CD4-positive, alpha-beta memory T cell (primary cell): ENCODE measurements at regions of chr9 and their contacts with region 1.

Region 1: GRCh38 chr9:69035438-69036308 is at the start of gene FXN:
- DNase-seq: peak; percentile 71 to 82 (median 78)
- H3K4me3 ChIP-seq: peak within 1 kb of the TSS; percentile 78 to 86
- H3K4me3 Mint-ChIP-seq: peak within 1 kb of the TSS; percentile 95 to 99 (median 98)
- H3K27ac ChIP-seq: peak within 1 kb of the TSS; percentile 60
- H3K27ac Mint-ChIP-seq: peak within 1 kb of the TSS; percentile 87 to 96 (median 94)
- H3K4me1 ChIP-seq: peaks cover 23% of the 10 kb centered on the region
- H3K4me1 Mint-ChIP-seq: peaks cover 18 to 36% (median 23%) of the 10 kb centered on the region in 4 donors
- H3K27me3 ChIP-seq: no peaks in the 10 kb centered on the region
- H3K27me3 Mint-ChIP-seq: no peaks in the 10 kb centered on the region
- total RNA-seq, gene FXN: 14.6 to 15.9 TPM

Region 2: DNA sequence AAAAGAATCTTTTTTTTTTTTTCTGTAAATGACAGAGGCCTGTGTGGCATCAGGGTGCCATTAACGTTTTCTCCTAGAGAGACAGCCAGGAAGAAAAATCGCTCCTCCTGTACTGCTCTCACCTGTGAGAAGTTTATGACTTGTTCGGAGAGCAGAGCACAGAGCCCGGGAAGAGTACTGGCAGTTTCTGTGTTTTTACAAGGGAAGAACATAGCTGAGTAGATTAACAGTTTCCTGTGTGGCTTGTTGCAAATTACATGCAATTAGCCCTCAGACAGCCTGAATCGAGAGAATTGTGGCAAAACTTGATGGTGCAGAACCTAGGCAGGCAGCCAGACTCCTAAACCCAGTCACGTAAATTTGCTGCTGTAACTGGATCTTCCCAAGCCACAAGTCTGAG is 53.9 kb before region 1 on chr9:
- CTCF ChIA-PET with region 1: no interaction called
- POLR2A ChIA-PET with region 1: no interaction called
- intact Hi-C with region 1: no loop called
- DNase-seq: no peak
- H3K4me3 ChIP-seq: no peak overlapping the region
- H3K4me3 Mint-ChIP-seq: no peak overlapping the region
- H3K27ac ChIP-seq: no peak overlapping the region
- H3K27ac Mint-ChIP-seq: no peak overlapping the region
- H3K4me1 ChIP-seq: peaks cover 16% of the 10 kb centered on the region
- H3K4me1 Mint-ChIP-seq: peaks cover 3 to 6% (median 6%) of the 10 kb centered on the region in 4 donors
- H3K27me3 ChIP-seq: no peaks in the 10 kb centered on the region
- H3K27me3 Mint-ChIP-seq: no peaks in the 10 kb centered on the region

Region 3: DNA sequence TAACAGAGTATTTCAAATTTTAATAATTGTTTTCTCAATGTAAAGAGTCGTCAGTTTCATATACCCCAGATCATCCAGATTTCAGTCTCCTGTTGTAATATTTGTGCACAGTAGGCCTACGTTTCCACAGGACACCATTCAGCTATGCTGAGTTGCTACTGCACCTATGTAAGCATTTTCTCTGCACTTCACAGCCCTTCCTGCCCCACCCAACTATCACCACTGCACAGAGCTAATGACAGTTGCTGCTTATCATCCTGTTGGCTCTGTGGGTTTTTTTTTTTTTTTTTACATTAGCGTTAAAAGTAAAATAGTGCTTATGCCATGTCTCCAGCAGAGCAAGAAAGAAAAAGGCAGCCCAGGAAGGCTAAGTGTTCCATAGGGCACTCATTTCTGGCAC is 15.9 kb before region 1 on chr9:
- CTCF ChIA-PET with region 1: interaction called, 43 read pairs
- POLR2A ChIA-PET with region 1: interaction called, 18 read pairs
- intact Hi-C with region 1: loop called (anchors 1 kb)
- DNase-seq: peak; percentile 62 to 72 (median 66)
- H3K4me3 ChIP-seq: no peak overlapping the region
- H3K4me3 Mint-ChIP-seq: peak overlapping the region in 7 of 8 donors; percentile 46 to 73 (median 56)
- H3K27ac ChIP-seq: peak overlapping the region; percentile 13
- H3K27ac Mint-ChIP-seq: peak overlapping the region; percentile 0 to 68 (median 26)
- H3K4me1 ChIP-seq: peaks cover 24% of the 10 kb centered on the region
- H3K4me1 Mint-ChIP-seq: peaks cover 17 to 35% (median 25%) of the 10 kb centered on the region in 4 donors
- H3K27me3 ChIP-seq: no peaks in the 10 kb centered on the region
- H3K27me3 Mint-ChIP-seq: peaks cover under 1 to 2% of the 10 kb centered on the region in 2 donors

Region 4: DNA sequence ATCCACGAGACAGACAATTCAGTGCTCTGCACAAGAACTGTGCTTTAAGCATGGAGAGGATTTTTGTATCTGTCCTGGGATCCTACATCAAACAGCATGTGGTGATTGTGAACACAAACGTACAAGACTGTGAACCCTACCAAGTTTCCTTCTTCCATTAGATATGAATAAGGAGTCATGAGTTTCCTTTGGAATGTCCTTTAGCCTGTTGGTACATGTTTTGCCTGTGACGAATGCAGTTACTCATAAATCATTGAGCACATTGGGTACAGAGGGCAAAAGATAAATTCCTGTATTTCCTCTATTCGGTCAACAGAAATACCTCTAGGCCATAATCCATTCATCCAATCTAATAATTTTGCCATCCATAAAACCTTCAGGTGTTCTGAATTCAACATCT is 61.4 kb after region 1 on chr9:
- CTCF ChIA-PET with region 1: no interaction called
- POLR2A ChIA-PET with region 1: no interaction called
- intact Hi-C with region 1: no loop called
- DNase-seq: no peak
- H3K4me3 ChIP-seq: no peak overlapping the region
- H3K4me3 Mint-ChIP-seq: no peak overlapping the region
- H3K27ac ChIP-seq: no peak overlapping the region
- H3K27ac Mint-ChIP-seq: no peak overlapping the region
- H3K4me1 ChIP-seq: no peaks in the 10 kb centered on the region
- H3K4me1 Mint-ChIP-seq: no peaks in the 10 kb centered on the region
- H3K27me3 ChIP-seq: no peaks in the 10 kb centered on the region
- H3K27me3 Mint-ChIP-seq: no peaks in the 10 kb centered on the region

Region 5: DNA sequence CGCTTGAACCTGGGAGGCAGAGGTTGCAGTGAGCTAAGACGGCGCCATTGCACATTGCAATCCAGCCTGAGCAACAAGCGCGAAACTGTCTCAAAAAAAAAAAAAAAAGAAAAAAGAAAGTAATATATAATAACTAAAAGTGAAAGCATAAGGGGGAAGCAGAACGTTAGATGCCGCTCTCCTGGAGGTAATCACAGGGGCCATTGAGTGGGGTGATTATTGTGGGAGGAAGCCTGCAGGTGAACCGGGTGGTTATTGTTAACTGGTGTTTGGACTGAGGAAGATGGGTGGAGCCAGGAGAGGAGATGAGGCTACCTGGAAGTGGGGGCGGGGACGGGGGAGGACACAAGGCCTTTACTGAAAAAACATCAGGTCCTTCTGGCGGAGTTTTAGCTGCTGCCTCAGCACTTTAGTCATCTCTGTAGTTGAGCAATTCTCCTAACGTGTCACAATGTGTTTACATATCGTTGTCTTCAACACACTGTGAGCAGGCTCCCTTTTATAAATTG is 133.1 kb after region 1 on chr9:
- CTCF ChIA-PET with region 1: interaction called, 7 read pairs
- POLR2A ChIA-PET with region 1: no interaction called
- intact Hi-C with region 1: loop called (anchors 5 kb)
- DNase-seq: peak; percentile 25 to 55 (median 40)
- H3K4me3 ChIP-seq: peak overlapping the region in 1 of 2 donors; percentile 47
- H3K4me3 Mint-ChIP-seq: peak overlapping the region; percentile 86 to 95 (median 91)
- H3K27ac ChIP-seq: peak overlapping the region; percentile 22
- H3K27ac Mint-ChIP-seq: peak overlapping the region; percentile 41 to 95 (median 86)
- H3K4me1 ChIP-seq: peaks cover 18% of the 10 kb centered on the region
- H3K4me1 Mint-ChIP-seq: peaks cover 9 to 27% (median 17%) of the 10 kb centered on the region in 4 donors
- H3K27me3 ChIP-seq: peaks cover 10% of the 10 kb centered on the region
- H3K27me3 Mint-ChIP-seq: peaks cover 4 to 14% of the 10 kb centered on the region in 2 donors

Region 6: GRCh38 chr9:69190086-69190862 is 154.6 kb after region 1 on chr9:
- CTCF ChIA-PET with region 1: interaction called, 56 read pairs
- POLR2A ChIA-PET with region 1: interaction called, 10 read pairs
- intact Hi-C with region 1: loop called (anchors 1 kb)
- DNase-seq: no peak
- H3K4me3 ChIP-seq: no peak overlapping the region
- H3K4me3 Mint-ChIP-seq: no peak overlapping the region
- H3K27ac ChIP-seq: no peak overlapping the region
- H3K27ac Mint-ChIP-seq: no peak overlapping the region
- H3K4me1 ChIP-seq: peaks cover 9% of the 10 kb centered on the region
- H3K4me1 Mint-ChIP-seq: peaks cover 2 to 10% (median 7%) of the 10 kb centered on the region in 4 donors
- H3K27me3 ChIP-seq: no peaks in the 10 kb centered on the region
- H3K27me3 Mint-ChIP-seq: no peaks in the 10 kb centered on the region

Region 7: DNA sequence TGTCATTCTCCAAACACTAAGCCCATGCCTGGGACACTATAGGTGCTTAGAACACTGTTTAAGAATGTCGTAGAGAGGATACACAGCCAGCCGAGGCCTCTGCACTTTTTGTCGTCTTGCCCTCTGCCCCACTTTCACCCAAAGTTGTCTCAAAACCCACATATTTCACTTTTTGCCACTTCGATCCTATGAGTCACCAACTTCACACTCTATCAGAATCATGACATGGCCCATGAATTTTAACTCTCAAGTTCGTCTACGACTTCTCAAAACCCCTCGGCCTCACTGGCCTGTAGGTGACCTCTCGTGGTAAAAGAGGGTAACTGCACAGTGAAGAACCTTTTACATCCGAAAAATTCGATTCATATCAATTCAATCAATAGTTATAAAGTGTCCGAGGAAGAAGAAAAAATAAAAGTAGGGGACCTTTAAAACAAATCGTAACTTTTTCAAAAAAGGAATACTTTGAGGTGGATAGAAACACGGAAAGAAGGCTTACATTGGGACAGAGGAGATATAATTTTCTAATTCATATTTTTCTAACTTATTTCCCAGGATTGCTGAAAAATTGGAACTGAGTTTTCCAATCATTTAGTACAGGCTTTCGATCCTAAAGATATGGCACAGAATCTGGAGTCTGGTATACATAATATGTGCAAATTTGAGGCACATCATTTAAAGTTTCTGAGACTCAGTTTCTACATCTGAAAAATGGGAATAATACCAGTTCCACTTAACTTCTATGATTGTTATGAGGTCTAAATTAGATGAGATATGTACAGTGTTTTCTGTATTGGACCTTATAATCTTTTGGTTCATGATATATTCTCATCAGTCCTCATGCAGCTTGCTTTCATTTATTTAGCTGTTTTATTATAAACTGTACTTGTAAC is 513.9 kb after region 1 on chr9:
- CTCF ChIA-PET with region 1: no interaction called
- POLR2A ChIA-PET with region 1: no interaction called
- intact Hi-C with region 1: loop called (anchors 5 kb)
- DNase-seq: peak in 4 of 5 donors; percentile 36 to 45 (median 38)
- H3K4me3 ChIP-seq: no peak overlapping the region
- H3K4me3 Mint-ChIP-seq: peak overlapping the region in 6 of 8 donors; percentile 5 to 49 (median 33)
- H3K27ac ChIP-seq: no peak overlapping the region
- H3K27ac Mint-ChIP-seq: peak overlapping the region in 1 of 7 donors; percentile 26
- H3K4me1 ChIP-seq: no peaks in the 10 kb centered on the region
- H3K4me1 Mint-ChIP-seq: peaks cover 0 to 6% (median 4%) of the 10 kb centered on the region in 4 donors
- H3K27me3 ChIP-seq: no peaks in the 10 kb centered on the region
- H3K27me3 Mint-ChIP-seq: peaks cover 4 to 6% of the 10 kb centered on the region in 2 donors

Region 8: DNA sequence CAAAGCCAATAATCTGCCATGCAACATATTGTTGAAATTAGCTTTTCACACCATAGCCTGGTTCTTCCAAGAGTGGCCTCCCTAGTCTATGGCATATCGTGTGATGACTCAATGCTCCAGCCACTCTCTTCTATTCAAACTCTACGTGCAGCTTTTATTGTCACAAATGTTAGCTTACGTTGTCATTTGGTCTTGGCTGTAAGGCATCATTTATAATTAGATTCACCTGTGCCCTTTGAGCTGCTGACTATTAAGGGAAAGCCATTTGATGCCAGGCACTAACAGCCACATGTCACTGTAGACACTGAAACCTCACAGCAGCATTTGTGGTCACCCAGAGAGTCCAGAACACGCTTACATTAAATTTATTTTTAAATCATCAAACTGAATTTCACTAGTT is 569.7 kb after region 1 on chr9:
- CTCF ChIA-PET with region 1: no interaction called
- POLR2A ChIA-PET with region 1: no interaction called
- intact Hi-C with region 1: no loop called
- DNase-seq: no peak
- H3K4me3 ChIP-seq: no peak overlapping the region
- H3K4me3 Mint-ChIP-seq: no peak overlapping the region
- H3K27ac ChIP-seq: no peak overlapping the region
- H3K27ac Mint-ChIP-seq: no peak overlapping the region
- H3K4me1 ChIP-seq: no peaks in the 10 kb centered on the region
- H3K4me1 Mint-ChIP-seq: no peaks in the 10 kb centered on the region
- H3K27me3 ChIP-seq: no peaks in the 10 kb centered on the region
- H3K27me3 Mint-ChIP-seq: peaks cover under 1 to 2% of the 10 kb centered on the region in 2 donors

Region 9: DNA sequence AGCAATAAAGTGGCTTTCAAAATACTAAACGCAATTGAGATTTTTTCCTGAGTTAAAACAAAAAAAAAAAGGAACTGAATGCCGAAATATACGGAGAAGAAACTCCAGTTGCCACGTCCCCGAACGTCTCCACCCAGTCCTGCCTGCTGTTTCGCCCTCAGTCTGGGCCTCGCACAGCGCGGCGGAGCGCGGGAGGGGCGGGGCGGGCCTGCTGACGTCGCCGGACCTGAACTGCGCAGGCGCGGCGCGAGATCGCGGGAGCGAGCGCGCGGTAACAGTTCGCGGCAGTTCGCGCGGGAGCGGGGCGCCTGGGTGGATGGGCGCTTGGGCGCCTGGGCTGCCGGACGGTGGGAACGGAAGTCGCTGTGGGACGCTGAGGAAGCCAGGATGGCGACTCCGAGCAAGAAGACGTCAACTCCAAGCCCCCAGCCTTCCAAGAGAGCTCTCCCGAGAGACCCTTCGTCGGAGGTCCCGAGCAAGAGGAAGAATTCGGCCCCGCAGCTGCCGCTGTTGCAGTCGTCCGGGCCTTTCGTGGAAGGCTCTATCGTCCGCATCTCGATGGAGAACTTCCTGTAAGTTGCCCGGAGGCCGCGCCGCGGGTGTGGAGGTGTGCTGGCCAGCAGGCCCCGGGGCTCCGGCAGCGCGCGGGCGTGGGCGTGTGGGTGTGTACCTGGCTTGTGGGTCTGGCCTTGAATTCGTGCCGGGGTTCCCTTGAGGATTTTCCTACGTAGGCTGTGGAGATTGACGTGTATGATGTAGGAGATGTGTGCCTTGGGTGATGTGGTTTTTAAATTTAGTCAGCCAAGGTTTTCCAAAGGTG is 1223.2 kb after region 1 on chr9 and contains the start of gene SMC5:
- CTCF ChIA-PET with region 1: no interaction called
- POLR2A ChIA-PET with region 1: no interaction called
- intact Hi-C with region 1: loop called (anchors 5 kb)
- DNase-seq: peak; percentile 85 to 93 (median 92)
- H3K4me3 ChIP-seq: peak within 1 kb of the TSS; percentile 62 to 66
- H3K4me3 Mint-ChIP-seq: peak within 1 kb of the TSS; percentile 89 to 99 (median 96)
- H3K27ac ChIP-seq: peak within 1 kb of the TSS; percentile 95
- H3K27ac Mint-ChIP-seq: peak within 1 kb of the TSS; percentile 91 to 99 (median 97)
- H3K4me1 ChIP-seq: peaks cover 55% of the 10 kb centered on the region
- H3K4me1 Mint-ChIP-seq: peaks cover 44 to 65% (median 51%) of the 10 kb centered on the region in 4 donors
- H3K27me3 ChIP-seq: no peaks in the 10 kb centered on the region
- H3K27me3 Mint-ChIP-seq: no peaks in the 10 kb centered on the region
- total RNA-seq, gene SMC5: 43.7 to 48.3 TPM